HEK293T (cell line): ENCODE measurements at regions of chr2 and their contacts with region 1.

Region 1: GRCh38 chr2:231463698-231464575 is at the start of gene NCL:
- DNase-seq: peak; percentile 56

Region 2: DNA sequence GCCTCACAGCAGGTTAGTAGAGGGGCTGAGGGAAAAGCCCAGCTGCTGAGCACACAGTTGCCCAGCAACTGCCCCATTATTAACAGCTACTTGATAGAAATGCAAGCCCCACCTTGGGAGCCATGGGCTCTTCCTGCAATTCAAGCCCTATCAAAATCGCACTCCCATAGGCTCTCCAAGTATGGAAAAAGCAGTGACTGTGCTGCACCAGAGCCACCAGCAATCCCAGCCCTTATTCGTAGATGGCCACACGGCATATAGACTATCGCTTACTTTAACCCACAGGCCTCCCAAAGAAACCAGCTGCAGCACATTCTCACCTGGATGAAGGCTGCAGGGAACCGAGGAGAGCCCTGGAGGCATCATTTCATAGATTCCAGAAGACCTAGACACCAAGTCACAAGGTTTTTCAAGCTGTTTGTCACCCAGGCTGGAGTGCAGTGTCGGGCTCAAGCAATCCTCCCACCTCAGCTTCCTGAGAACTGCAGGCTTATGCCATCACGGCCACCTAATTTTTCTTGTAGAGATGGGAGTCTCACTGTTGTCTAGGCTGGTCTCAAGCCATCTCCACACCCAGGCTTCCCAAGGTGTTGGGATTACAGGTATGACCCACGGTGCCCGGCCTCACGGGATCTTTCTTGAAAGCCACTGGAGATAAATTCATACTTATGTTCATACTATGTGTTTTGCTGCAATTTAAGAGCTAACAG is 11.0 kb before region 1 on chr2:
- CTCF ChIA-PET with region 1: interaction called, 4 read pairs
- POLR2A ChIA-PET with region 1: interaction called, 135 read pairs
- DNase-seq: no peak

Region 3: DNA sequence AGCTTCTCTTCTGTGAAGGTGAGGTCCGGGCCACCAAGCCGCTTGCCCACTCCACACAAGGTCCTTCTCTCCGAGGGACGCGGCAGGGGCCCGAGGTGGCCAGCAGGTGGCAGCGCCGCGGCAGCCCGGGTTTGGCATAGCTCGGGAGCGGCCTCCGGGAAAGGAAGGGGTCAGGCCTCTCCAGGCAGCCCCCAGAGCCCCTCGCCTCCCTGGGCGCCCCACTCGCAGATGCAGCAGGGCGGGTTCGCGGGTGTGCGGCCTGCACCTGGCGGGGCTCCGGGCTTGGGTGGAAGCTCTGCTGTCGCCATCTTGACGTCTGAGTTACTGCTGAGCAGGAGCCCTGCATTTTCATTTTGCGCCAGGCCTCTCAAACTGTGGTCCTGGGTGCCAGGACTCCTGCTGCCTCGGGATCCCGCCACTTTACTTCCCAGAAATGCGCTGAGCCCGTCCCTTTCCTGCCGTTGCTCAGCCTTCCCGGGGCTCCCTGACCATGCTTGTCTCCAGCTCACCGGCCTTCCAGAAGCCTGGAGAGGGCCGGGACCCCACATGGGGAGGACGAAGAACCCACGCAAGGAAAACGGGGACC is 19.0 kb after region 1 on chr2:
- CTCF ChIA-PET with region 1: interaction called, 20 read pairs
- POLR2A ChIA-PET with region 1: interaction called, 134 read pairs
- DNase-seq: peak; percentile 89

Region 4: GRCh38 chr2:231514103-231514950 is 50.4 kb after region 1 on chr2:
- CTCF ChIA-PET with region 1: no interaction called
- POLR2A ChIA-PET with region 1: interaction called, 19 read pairs
- DNase-seq: peak; percentile 98

Region 5: DNA sequence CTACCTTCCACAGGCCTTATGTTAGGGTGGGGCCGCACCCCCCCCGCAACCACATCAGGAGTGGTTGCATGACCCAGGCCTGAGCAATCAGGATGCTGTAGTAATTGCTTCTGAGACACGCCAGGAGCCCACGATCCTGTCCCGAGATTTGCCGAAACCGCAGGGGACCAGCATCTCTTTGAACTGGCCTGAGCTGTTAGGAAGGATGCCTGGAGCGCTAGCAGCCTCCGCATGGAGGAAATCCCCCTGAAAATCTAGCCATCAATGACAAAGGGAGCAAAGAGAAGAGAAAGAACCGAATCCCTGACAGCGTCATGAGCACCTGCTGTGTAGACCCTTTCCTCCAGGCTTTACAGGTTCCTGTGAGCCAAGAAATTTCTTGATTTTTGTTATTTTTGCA is 120.0 kb after region 1 on chr2:
- CTCF ChIA-PET with region 1: no interaction called
- POLR2A ChIA-PET with region 1: no interaction called
- DNase-seq: no peak